CD4-positive, alpha-beta T cell (primary cell): ENCODE measurements at regions of chrX and their contacts with region 1.

Region 1: GRCh38 chrX:129654419-129655165 is at the start of gene APLN:
- DNase-seq: peak in 4 of 14 experiments; percentile 4 to 36 (median 30)
- ATAC-seq: peak; percentile 68
- H3K4me3 ChIP-seq: peak within 1 kb of the TSS; percentile 42
- H3K4me3 Mint-ChIP-seq: peak within 1 kb of the TSS; percentile 67
- H3K27ac ChIP-seq: no peak within 1 kb of the TSS
- H3K27ac Mint-ChIP-seq: no peak within 1 kb of the TSS
- H3K4me1 ChIP-seq: peaks cover 15% of the 10 kb centered on the region
- H3K4me1 Mint-ChIP-seq: peaks cover 9% of the 10 kb centered on the region
- H3K27me3 ChIP-seq: peaks cover 4 to 16% of the 10 kb centered on the region in 2 experiments
- H3K27me3 Mint-ChIP-seq: peaks cover 14% of the 10 kb centered on the region
- CTCF ChIP-seq: no peak
- total RNA-seq, gene APLN: not detected

Region 2: GRCh38 chrX:129726307-129727111 is 71.9 kb after region 1 on chrX:
- CTCF ChIA-PET with region 1: no interaction called
- POLR2A ChIA-PET with region 1: no interaction called
- intact Hi-C with region 1: loop called in 1 of 2 experiments (anchors 10 kb)
- DNase-seq: peak in 11 of 14 experiments; percentile 1 to 51 (median 23)
- ATAC-seq: no peak
- H3K4me3 ChIP-seq: no peak overlapping the region
- H3K4me3 Mint-ChIP-seq: no peak overlapping the region
- H3K27ac ChIP-seq: no peak overlapping the region
- H3K27ac Mint-ChIP-seq: no peak overlapping the region
- H3K4me1 ChIP-seq: peaks cover 21% of the 10 kb centered on the region
- H3K4me1 Mint-ChIP-seq: peaks cover 63% of the 10 kb centered on the region
- H3K27me3 ChIP-seq: no peaks in the 10 kb centered on the region
- H3K27me3 Mint-ChIP-seq: no peaks in the 10 kb centered on the region
- CTCF ChIP-seq: peak; percentile 20

Region 3: DNA sequence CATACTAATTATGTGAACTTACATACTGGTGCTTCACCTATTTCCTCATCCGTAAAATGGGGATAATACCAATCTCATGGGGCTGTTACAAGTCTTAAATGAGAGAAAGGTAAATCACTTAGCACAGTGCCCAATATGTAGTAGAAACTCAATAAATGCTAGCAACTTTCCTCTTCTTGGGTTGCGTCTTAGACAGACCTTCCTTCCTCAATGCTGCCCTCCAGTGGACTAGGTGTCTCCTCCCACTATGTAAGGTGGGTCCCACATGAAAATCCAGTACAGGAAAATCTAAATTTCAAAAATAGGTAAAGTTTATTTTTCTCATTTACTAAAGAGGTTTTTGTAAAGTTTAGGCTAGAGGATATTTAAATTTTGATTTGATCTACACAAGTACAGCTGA is 168.5 kb after region 1 on chrX:
- CTCF ChIA-PET with region 1: no interaction called
- POLR2A ChIA-PET with region 1: interaction called, 4 read pairs
- intact Hi-C with region 1: loop called (anchors 1 to 5 kb)
- DNase-seq: peak; percentile 16 to 80 (median 43)
- ATAC-seq: peak; percentile 76
- H3K4me3 ChIP-seq: no peak overlapping the region
- H3K4me3 Mint-ChIP-seq: no peak overlapping the region
- H3K27ac ChIP-seq: no peak overlapping the region
- H3K27ac Mint-ChIP-seq: no peak overlapping the region
- H3K4me1 ChIP-seq: peaks cover 5% of the 10 kb centered on the region
- H3K4me1 Mint-ChIP-seq: peaks cover 18% of the 10 kb centered on the region
- H3K27me3 ChIP-seq: no peaks in the 10 kb centered on the region
- H3K27me3 Mint-ChIP-seq: no peaks in the 10 kb centered on the region
- CTCF ChIP-seq: peak; percentile 73